Endothelial cell of umbilical vein (primary cell): ENCODE measurements at regions of chr19 and their contacts with region 1.

Region 1: DNA sequence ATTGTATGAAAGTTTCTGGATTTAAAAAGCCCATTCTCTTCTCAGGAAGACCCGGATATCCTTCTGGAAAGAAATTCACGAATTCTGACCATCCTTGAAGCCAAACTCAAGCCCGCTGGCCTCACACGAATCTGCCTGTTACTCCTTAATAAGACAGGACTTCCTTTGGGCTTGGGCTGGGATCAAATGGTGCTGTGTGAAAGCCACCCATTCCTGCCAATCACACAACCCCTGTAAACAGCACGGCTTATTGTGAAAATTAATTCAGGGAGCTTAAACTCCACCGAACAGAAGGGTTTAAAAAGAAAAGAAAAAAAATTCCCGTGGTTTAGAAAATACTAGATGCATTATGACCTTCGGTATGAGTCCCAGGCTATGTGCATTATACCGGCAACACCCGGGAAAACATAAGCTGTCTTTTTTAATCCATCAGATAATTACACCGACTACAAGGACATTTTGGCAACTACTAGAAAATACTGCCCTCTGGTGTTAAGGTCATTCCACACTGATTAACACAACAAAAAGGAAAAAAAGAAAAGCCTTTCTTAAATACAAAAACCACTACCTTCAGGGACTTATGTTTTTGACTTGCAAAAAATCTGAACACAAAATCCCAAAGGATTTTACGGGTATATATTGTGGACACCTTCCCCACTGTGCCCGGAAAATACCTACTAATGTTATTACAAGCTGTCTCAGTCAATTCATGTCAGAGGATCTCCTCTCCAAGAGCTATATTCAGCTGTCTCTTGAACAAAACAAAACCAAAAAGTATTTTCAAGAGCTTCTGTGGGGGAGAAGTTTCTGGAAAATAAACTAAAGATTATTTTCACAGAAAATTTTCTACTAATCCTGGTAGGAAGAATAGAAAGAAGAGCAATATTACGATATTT is 76.0 kb upstream of the LSM14A start:
- DNase-seq: peak; percentile 59
- H3K4me3 ChIP-seq: no peak overlapping the region
- H3K27ac ChIP-seq: no peak overlapping the region
- H3K4me1 ChIP-seq: no peaks in the 10 kb centered on the region
- H3K27me3 ChIP-seq: peaks cover 0 to 4% of the 10 kb centered on the region in 2 experiments
- CTCF ChIP-seq: peak; percentile 33 to 47
- POLR2A ChIP-seq: no peak

Region 2: GRCh38 chr19:33771384-33772101 is 324.7 kb before region 1 on chr19:
- CTCF ChIA-PET with region 1: interaction called, 387 read pairs
- POLR2A ChIA-PET with region 1: no interaction called
- dilution Hi-C with region 1: no loop called
- intact Hi-C with region 1: no loop called
- DNase-seq: peak; percentile 51
- H3K4me3 ChIP-seq: no peak overlapping the region
- H3K27ac ChIP-seq: no peak overlapping the region
- H3K4me1 ChIP-seq: no peaks in the 10 kb centered on the region
- H3K27me3 ChIP-seq: no peaks in the 10 kb centered on the region
- CTCF ChIP-seq: peak; percentile 76 to 82
- POLR2A ChIP-seq: no peak

Region 3: DNA sequence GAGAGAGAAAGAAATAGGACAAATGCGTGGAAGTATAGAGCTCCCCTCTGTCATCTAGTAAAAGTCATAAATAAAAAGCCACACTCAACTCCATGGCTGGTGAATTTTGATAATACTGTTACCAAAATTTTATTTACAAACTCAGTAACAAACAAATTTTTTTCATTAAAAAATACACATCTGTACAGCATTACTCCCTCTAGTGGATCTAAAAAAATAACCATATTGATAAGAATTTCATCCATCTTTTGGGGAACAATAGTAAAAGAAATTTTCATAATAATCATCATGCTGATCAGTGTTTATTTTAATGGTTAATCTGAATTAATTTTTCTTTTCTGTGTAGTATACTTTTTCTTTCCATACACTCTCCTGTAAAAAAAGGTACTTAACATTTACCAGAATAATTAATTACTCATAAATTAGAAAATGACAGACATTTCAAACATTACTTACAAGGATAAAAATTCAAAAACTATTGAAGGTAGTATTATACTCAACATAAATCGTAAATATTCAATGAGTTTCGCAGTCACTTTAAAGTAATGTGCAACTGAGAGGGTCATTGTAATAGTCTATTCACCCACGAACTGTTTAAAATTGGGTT is 97.4 kb before region 1 on chr19:
- CTCF ChIA-PET with region 1: interaction called, 25 read pairs
- POLR2A ChIA-PET with region 1: no interaction called
- dilution Hi-C with region 1: no loop called
- intact Hi-C with region 1: loop called (anchors 1 kb)
- DNase-seq: peak; percentile 21
- H3K4me3 ChIP-seq: no peak overlapping the region
- H3K27ac ChIP-seq: no peak overlapping the region
- H3K4me1 ChIP-seq: no peaks in the 10 kb centered on the region
- H3K27me3 ChIP-seq: peaks cover 3 to 6% of the 10 kb centered on the region in 2 experiments
- CTCF ChIP-seq: peak; percentile 11 to 17
- POLR2A ChIP-seq: no peak

Region 4: DNA sequence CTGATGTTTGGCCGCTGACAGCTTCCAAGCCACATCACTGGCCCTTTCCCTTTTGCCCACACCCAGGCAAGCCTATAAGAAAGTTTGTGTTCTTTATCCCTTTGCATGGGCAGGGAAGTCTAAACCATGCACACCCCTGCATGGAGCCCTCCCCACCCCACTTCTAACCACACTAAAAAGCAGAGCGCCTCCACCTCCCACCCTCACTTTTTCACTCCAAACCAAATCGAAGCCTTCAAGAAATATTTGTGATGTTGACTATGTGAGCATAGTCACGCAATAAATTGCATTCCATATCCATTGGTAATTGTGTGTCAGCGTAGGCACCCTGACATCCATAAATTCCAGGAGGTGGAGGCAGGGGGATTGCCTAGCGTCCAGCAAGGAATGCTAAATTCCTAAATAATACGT is 28.4 kb before region 1 on chr19:
- CTCF ChIA-PET with region 1: interaction called, 10 read pairs
- POLR2A ChIA-PET with region 1: no interaction called
- dilution Hi-C with region 1: no loop called
- intact Hi-C with region 1: no loop called
- DNase-seq: no peak
- H3K4me3 ChIP-seq: no peak overlapping the region
- H3K27ac ChIP-seq: no peak overlapping the region
- H3K4me1 ChIP-seq: no peaks in the 10 kb centered on the region
- H3K27me3 ChIP-seq: no peaks in the 10 kb centered on the region
- CTCF ChIP-seq: no peak
- POLR2A ChIP-seq: no peak

Region 5: GRCh38 chr19:34109601-34110000 is 13.3 kb after region 1 on chr19:
- CTCF ChIA-PET with region 1: interaction called, 33 read pairs
- POLR2A ChIA-PET with region 1: no interaction called
- dilution Hi-C with region 1: no loop called
- intact Hi-C with region 1: no loop called
- DNase-seq: no peak
- H3K4me3 ChIP-seq: no peak overlapping the region
- H3K27ac ChIP-seq: no peak overlapping the region
- H3K4me1 ChIP-seq: no peaks in the 10 kb centered on the region
- H3K27me3 ChIP-seq: peaks cover 0 to under 1% of the 10 kb centered on the region in 2 experiments
- CTCF ChIP-seq: no peak
- POLR2A ChIP-seq: no peak